ENCODE measurements at regions of chr5 and their contacts with region 1.

Region 1: DNA sequence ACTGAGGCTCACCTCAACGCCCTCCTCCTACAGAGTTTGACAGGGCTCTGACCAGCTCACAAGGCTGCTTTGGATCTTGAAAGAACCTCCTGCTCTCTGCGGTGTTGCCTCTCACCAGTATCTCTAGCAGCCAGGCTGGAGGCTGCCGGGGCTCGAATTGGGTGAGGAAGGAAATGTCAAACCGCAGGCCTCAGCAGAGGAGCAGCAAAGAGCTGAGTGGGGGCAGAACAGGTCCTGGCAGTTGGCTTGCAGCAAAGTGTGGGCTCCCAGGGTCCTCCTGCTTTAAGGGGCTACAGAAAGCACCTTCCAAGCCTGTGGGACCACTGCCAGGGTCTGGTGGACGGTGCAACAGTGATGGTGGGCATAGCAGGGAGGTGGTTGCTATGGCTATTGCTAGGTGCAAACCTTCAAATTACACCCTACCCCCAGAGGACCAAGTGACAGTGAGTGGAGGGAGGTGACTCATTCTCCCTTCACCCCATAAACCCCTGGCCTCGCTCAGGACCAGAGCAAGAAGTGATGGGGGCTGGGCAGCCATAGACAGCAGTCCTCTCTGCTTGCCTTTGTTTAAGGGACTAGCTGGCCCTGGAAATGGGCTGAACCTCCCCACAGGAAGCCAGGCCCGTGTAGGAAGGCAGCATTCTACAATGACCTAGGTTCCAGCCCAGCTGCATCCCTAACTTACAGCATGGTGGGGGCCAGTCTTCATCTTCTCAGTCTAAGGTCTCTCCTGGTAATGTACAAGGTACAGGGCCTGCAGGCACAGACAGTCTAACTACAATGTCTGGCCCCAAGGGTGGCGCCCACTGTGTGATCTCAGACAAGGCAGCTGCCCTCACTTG is 18.7 kb downstream of the LCP2 start:
- DNase-seq: peak in 4 of 5 donors; percentile 54 to 83 (median 56)
- ATAC-seq: peak; percentile 4 to 71 (median 54)
- H3K4me3 ChIP-seq: peak overlapping the region in 1 of 12 donors; percentile 1
- H3K27ac ChIP-seq: peak overlapping the region in 2 of 12 donors; percentile 9 to 79
- H3K4me1 ChIP-seq: peaks cover 0 to 96% (median 10%) of the 10 kb centered on the region in 12 donors
- H3K27me3 ChIP-seq: no peaks in the 10 kb centered on the region
- CTCF ChIP-seq: no peak
- POLR2A ChIP-seq: no peak

Region 2: GRCh38 chr5:170333161-170333910 is 54.5 kb after region 1 on chr5:
- intact Hi-C with region 1: loop called in 4 of 10 experiments (anchors 5 to 10 kb)
- DNase-seq: no peak
- ATAC-seq: peak in 3 of 4 donors; percentile 12 to 19 (median 18)
- H3K4me3 ChIP-seq: peak overlapping the region in 1 of 12 donors; percentile 21
- H3K27ac ChIP-seq: peak overlapping the region in 2 of 12 donors; percentile 18 to 90
- H3K4me1 ChIP-seq: peaks cover 0 to 93% (median 13%) of the 10 kb centered on the region in 12 donors
- H3K27me3 ChIP-seq: no peaks in the 10 kb centered on the region
- CTCF ChIP-seq: no peak
- POLR2A ChIP-seq: no peak

Region 3: GRCh38 chr5:170338933-170339779 is 60.3 kb after region 1 on chr5:
- intact Hi-C with region 1: loop called in 4 of 10 experiments (anchors 5 to 10 kb)
- DNase-seq: no peak
- ATAC-seq: peak in 3 of 4 donors; percentile 38 to 63 (median 62)
- H3K4me3 ChIP-seq: no peak overlapping the region
- H3K27ac ChIP-seq: no peak overlapping the region
- H3K4me1 ChIP-seq: peaks cover 0 to 50% (median 0%) of the 10 kb centered on the region in 12 donors
- H3K27me3 ChIP-seq: no peaks in the 10 kb centered on the region
- CTCF ChIP-seq: peak in 11 of 12 donors; percentile 25 to 58 (median 41)
- POLR2A ChIP-seq: no peak

Region 4: DNA sequence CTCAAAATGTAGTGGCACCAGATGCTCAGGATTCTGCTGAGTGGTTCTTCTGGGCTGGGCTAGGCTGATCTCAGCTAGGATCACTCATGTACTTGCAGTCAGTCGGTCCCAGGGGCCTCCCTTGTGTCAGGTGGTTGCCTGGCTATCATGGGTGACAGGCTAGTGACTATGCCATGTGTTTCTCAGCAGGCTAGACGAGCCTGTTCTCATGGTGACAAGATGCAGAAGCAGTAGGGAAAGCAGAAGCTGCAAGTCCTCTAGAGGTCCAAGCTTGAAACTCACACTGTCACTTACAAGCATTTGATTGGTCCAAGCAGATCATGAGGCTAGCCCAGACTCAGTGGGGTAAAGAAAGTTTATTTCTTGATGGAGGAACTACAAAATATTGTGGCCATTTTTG is 125.6 kb after region 1 on chr5:
- intact Hi-C with region 1: loop called in 1 of 10 experiments (anchors 5 kb)
- DNase-seq: no peak
- ATAC-seq: peak in 2 of 4 donors; percentile 44 to 45
- H3K4me3 ChIP-seq: no peak overlapping the region
- H3K27ac ChIP-seq: no peak overlapping the region
- H3K4me1 ChIP-seq: peaks cover 0 to 21% (median 0%) of the 10 kb centered on the region in 12 donors
- H3K27me3 ChIP-seq: no peaks in the 10 kb centered on the region
- CTCF ChIP-seq: no peak
- POLR2A ChIP-seq: no peak

Region 5: DNA sequence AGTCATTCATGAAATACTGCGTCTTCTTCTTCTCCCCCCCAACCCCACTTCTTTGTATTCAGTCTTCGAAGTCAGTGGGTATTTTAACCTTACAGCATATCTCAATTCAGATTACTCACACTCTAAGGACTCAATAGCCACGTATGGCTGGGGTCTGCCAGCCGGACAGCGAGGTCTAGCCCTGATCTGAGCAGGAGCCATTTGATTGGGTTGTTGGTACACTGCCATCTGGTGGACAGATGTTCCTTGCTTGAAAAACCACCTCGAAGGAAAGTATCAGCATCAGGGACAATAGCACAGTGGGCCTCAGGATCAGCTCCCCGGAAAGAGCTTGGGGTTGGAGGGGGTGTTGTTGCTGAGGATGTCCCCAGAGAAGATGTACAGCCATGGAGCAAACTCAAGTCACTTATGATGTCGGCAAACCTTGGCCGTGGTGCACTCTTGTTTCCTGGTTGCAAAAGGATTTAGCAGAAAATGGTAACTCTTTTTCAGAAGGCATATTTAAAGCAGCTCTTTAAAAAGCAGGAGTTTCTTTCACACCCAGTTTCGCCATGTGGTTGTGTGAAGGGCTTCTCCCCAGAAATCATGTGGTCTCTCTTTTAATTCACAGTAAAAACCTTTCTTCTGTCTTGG is 142.1 kb after region 1 on chr5:
- intact Hi-C with region 1: loop called in 1 of 10 experiments (anchors 5 kb)
- DNase-seq: peak in 4 of 5 donors; percentile 55 to 63 (median 59)
- ATAC-seq: peak in 3 of 4 donors; percentile 67 to 83 (median 76)
- H3K4me3 ChIP-seq: no peak overlapping the region
- H3K27ac ChIP-seq: peak overlapping the region in 1 of 12 donors; percentile 14
- H3K4me1 ChIP-seq: peaks cover 0 to 34% (median 2%) of the 10 kb centered on the region in 12 donors
- H3K27me3 ChIP-seq: no peaks in the 10 kb centered on the region
- CTCF ChIP-seq: peak; percentile 63 to 86 (median 78)
- POLR2A ChIP-seq: no peak